H1 (cell line): ENCODE measurements at regions of chr18 and their contacts with region 1.

Region 1: GRCh38 chr18:616380-616995 is 19.7 kb downstream of the CLUL1 start:
- DNase-seq: no peak
- H3K4me3 ChIP-seq: no peak overlapping the region
- H3K27ac ChIP-seq: no peak overlapping the region
- H3K4me1 ChIP-seq: no peaks in the 10 kb centered on the region
- H3K27me3 ChIP-seq: no peaks in the 10 kb centered on the region
- CTCF ChIP-seq: peak in 2 of 3 experiments; percentile 45 to 58; a peak in 2 of 4 replicates
- EP300 ChIP-seq: no peak
- POLR2A ChIP-seq: no peak
- RAD21 ChIP-seq: peak; percentile 85 to 90

Region 2: DNA sequence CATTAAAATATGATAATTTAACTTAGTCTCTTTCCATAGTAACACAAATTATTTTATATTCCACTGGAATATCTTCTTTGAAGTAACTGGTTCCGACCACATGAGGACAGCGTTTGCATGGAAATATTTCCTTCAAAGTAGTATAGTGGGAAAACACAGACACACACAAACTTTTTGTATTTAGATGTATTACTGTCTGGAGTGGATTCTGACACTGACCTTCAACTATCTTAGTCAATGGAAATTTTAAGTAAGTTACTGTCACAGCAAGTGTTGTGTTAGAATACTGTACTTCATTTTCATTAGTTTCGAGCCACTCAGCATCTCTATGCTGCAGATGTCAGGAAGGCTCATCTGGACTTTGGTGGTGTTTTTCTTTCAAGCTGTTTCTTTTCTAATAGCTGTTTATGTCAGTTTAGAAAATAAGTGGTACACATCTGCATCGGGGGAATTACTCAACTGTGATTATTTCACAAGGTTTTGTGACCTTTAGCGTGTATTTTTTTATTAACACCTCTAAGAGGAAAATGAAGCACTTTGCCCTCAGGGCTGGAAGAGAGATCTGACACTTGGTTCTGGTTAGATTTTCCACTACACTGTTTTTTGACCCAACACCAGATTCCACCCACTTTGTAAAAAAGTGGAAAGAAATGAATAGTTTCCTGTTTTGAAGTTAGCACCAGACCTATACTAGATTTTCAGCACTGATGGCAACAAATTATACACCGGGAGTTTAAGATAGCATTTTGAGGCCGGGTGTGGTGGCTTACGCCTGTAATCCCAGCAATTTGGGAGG is 329.8 kb before region 1 on chr18:
- CTCF ChIA-PET with region 1: interaction called, 16 read pairs
- POLR2A ChIA-PET with region 1: no interaction called
- DNase-seq: no peak
- H3K4me3 ChIP-seq: no peak overlapping the region
- H3K27ac ChIP-seq: no peak overlapping the region
- H3K4me1 ChIP-seq: no peaks in the 10 kb centered on the region
- H3K27me3 ChIP-seq: no peaks in the 10 kb centered on the region
- CTCF ChIP-seq: peak in 2 of 3 experiments; percentile 24 to 42; a peak in 2 of 4 replicates
- EP300 ChIP-seq: no peak
- POLR2A ChIP-seq: no peak
- RAD21 ChIP-seq: peak; percentile 73 to 78

Region 3: GRCh38 chr18:600107-600506 is 16.4 kb before region 1 on chr18:
- CTCF ChIA-PET with region 1: interaction called, 20 read pairs
- POLR2A ChIA-PET with region 1: no interaction called
- DNase-seq: no peak
- H3K4me3 ChIP-seq: no peak overlapping the region
- H3K27ac ChIP-seq: no peak overlapping the region
- H3K4me1 ChIP-seq: peaks cover 0 to 5% (median 0%) of the 10 kb centered on the region in 4 experiments; a peak in 1 of 7 replicates
- H3K27me3 ChIP-seq: no peaks in the 10 kb centered on the region
- CTCF ChIP-seq: no peak
- EP300 ChIP-seq: no peak
- POLR2A ChIP-seq: no peak
- RAD21 ChIP-seq: no peak

Region 4: DNA sequence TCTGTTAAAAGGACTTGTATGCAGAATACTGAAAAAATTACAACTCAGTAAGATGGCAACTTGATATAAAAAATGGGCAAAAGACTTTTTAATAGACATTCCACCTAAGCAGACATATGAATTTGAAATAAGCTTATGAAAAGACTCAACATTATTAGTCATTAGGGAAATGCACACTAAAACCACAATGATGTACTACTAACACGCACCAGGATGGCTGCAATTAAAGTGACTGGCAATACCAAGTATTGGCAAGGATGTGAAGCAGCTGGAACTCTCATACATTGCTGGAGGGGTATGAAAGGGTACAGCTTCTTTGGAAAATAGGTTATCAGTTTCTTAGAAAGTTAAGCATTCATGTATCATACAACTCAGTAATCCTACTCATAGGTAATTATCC is 99.1 kb after region 1 on chr18:
- CTCF ChIA-PET with region 1: no interaction called
- POLR2A ChIA-PET with region 1: no interaction called
- DNase-seq: no peak
- H3K4me3 ChIP-seq: no peak overlapping the region
- H3K27ac ChIP-seq: no peak overlapping the region
- H3K4me1 ChIP-seq: peaks cover 0 to 3% (median 1%) of the 10 kb centered on the region in 4 experiments; a peak in 2 of 7 replicates
- H3K27me3 ChIP-seq: no peaks in the 10 kb centered on the region
- CTCF ChIP-seq: no peak
- EP300 ChIP-seq: no peak
- POLR2A ChIP-seq: no peak
- RAD21 ChIP-seq: no peak

Region 5: GRCh38 chr18:765764-766549 is 149.5 kb after region 1 on chr18:
- CTCF ChIA-PET with region 1: no interaction called
- POLR2A ChIA-PET with region 1: no interaction called
- DNase-seq: no peak
- H3K4me3 ChIP-seq: no peak overlapping the region
- H3K27ac ChIP-seq: no peak overlapping the region
- H3K4me1 ChIP-seq: 0 out of 7 replicates have a peak, but pooled peaks cover 0 to 1% (median 0%) of the 10 kb centered on the region in 4 experiments
- H3K27me3 ChIP-seq: no peaks in the 10 kb centered on the region
- CTCF ChIP-seq: no peak
- EP300 ChIP-seq: no peak
- POLR2A ChIP-seq: no peak
- RAD21 ChIP-seq: no peak